ENCODE measurements at regions of chr1 and their contacts with region 1.

Region 1: DNA sequence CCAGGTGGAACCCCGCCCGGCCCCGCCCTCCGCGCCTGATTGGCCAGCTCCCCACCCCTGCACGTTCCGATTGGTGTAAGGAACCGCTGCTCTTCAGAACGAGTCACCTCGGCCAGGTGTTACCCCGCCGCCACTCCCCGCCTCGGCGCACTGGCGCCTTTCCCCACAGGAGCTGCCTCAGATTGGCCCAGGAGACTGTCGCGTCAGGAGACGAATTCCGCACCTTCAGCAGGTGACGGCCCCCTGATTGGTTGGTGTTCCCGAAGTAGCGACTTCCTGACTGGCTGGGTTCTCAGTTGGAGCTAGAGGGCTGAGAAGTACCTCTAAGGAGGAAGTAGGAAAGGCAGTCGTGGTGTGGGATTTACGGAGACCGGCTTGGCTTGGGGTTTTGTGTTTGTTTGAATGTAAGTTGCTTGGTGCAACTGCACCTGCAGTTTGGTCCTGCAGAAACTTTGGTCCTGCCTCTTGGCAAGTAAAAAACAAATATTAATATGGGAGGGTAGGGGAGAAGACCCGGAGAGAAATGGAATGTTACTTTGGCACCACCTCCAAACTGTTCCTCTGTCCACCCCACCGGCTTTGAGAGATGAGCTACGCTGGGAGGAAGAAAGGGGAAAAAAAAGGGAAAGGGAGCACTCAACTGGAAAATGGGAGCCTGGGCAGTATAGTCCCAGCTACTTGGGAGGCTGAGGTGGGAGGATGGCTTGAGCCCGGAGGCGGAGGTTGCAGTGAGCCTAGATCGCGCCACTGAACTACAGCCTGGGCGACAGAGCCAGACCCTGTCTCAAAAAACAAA is 411 bp upstream of the F11R start:
- DNase-seq: peak; percentile 90
- ATAC-seq: peak; percentile 96
- H3K4me3 Mint-ChIP-seq: peak overlapping the region; percentile 82
- H3K27ac Mint-ChIP-seq: peak overlapping the region; percentile 86
- H3K4me1 Mint-ChIP-seq: peaks cover 32% of the 10 kb centered on the region
- H3K27me3 Mint-ChIP-seq: no peaks in the 10 kb centered on the region

Region 2: DNA sequence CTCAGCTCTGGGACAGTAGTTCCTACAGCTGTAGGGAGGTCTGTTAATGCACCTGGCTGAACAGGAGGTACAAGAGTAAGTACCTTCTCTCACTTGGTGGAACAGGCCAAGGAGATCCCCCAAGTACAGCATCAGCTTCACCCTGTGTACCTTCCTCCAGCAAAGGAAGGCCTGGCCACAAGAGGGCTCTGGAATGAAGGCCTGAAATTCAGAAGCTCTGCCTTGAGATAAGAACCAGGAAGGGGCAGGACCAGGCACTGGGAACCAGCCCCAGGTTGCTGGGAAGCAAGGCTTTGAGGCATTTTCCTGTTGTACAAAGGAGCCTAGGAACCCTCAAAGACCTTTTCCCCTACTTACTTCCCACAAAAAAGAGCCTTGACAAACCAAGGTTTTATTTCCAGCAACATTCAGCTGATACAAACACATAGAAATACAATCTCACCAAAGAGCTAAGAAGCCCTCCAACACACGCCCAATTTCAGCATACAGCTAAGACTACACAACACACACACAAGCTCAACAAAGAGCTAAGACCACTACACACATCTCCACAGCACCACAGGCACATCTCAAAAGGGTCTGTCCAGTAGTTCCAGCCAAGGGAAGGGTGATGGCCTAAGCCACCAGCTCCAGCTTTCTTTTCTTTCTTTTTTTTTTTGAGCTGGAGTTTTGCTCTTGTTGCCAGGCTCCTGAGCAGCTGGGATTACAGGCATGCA is 23.9 kb before region 1 on chr1:
- CTCF ChIA-PET with region 1: interaction called, 15 read pairs
- DNase-seq: peak; percentile 66
- ATAC-seq: peak; percentile 73
- H3K4me3 Mint-ChIP-seq: no peak overlapping the region
- H3K27ac Mint-ChIP-seq: peak overlapping the region; percentile 21
- H3K4me1 Mint-ChIP-seq: peaks cover 19% of the 10 kb centered on the region
- H3K27me3 Mint-ChIP-seq: peaks cover 3% of the 10 kb centered on the region

Region 3: GRCh38 chr1:161082991-161083742 is 61.8 kb after region 1 on chr1:
- CTCF ChIA-PET with region 1: no interaction called
- DNase-seq: no peak
- ATAC-seq: no peak
- H3K4me3 Mint-ChIP-seq: no peak overlapping the region
- H3K27ac Mint-ChIP-seq: no peak overlapping the region
- H3K4me1 Mint-ChIP-seq: peaks cover 12% of the 10 kb centered on the region
- H3K27me3 Mint-ChIP-seq: no peaks in the 10 kb centered on the region

Region 4: DNA sequence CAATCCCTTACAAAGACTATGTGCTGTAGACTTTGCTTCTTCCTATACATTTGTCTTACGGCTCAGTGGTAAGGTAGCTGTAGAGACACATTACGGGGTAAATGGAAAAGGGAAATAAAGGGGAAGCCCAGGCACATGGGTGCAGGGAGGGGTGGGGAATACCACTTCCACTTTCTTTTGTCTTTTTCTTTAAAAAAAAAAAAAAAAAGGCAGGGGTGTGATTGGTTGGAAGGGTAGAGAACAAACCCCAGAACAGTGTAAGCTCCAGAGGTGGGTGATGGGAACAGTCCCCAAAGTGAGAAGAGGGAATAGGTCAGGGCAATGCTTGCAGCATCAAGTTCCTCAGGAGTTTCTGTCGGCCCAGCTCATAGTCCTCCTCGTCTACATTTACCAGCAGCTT is 100.5 kb after region 1 on chr1:
- CTCF ChIA-PET with region 1: no interaction called
- DNase-seq: no peak
- ATAC-seq: no peak
- H3K4me3 Mint-ChIP-seq: no peak overlapping the region
- H3K27ac Mint-ChIP-seq: no peak overlapping the region
- H3K4me1 Mint-ChIP-seq: peaks cover 34% of the 10 kb centered on the region
- H3K27me3 Mint-ChIP-seq: no peaks in the 10 kb centered on the region

Region 5: DNA sequence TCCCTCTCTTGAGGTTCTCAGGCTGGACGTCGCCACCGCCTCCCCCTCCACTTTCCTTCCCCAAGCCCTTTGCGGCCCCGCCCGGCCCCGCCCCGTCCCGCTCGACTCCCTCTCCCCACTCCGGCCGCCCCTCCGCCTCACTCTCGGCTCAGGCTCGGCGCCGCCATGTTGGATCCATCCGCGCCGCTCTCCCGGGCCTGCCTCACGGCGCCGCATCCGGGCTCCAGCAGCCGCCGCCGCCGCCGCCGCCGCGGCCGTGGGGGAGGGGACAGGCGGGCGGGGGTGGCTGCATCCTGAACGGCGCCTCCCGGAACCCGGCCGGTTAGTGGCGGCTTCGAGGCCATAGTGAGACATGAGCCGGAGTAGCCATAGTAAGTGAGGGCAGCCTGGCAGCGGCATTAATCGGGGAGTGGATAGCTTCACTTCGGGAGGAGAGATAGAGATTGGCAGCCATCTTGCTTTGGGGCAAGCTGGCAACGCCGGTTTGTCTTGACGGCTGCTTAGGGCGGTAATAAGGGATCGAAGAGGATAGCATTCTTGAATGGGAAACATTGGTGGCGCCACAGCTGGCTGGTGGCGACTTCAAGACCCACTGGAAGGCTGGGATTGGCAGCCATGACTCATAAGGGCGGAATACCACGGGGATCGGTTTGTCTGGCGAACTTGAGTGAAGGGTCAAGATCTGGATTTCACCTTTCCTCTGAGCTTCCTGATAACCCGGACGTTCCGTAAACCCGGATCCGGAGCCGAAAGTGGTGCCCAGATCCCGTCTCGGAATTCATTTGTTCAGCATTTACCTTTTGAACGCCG is 111.3 kb after region 1 on chr1 and contains the start of gene DEDD:
- CTCF ChIA-PET with region 1: no interaction called
- DNase-seq: peak; percentile 95
- ATAC-seq: peak; percentile 95
- H3K4me3 Mint-ChIP-seq: no peak within 1 kb of the TSS
- H3K27ac Mint-ChIP-seq: no peak within 1 kb of the TSS
- H3K4me1 Mint-ChIP-seq: peaks cover 35% of the 10 kb centered on the region
- H3K27me3 Mint-ChIP-seq: no peaks in the 10 kb centered on the region
- total RNA-seq, gene DEDD: 37.1 to 40.6 TPM

Region 6: DNA sequence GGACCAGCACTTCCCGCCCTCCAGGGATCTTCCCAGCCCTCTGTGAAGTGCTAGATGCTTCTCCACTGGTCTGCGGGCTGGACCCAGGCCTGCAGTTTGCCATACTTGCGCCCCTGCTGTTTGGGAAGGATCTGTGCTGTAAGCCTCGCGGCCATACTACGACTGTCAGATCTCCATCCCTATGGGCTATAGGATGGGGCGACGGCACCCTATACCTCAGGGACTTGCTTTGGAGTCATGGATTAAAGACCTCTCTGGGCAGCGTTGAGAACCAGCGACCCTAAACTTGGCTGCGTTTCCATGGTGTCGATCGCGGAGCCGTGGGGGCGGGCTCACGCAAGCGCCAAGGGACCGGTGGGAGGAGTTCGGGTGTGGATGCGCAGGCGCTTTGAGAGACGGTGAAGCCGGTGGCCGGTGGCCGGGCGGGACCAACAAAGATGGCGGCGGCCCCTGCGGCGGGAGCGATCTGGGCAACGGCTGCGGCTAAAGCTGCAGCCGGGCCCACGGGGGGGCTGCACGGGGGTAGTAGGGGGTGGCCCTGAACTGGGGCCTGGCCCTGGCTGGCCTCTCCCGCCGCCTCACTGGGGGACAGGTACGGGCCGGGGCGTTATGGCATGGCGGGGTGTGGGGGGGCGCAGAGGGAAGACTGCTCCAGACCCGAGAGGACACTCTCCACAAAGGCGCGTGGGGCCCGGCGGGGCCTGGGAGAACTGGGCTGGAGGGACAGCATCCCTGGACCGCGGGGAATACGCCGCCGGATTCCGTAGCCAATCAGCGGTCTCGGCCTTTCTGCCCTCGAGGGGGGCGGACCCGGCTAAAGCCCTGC is 137.9 kb after region 1 on chr1 and contains the start of gene USP21:
- CTCF ChIA-PET with region 1: no interaction called
- DNase-seq: peak; percentile 95
- ATAC-seq: peak; percentile 95
- H3K4me3 Mint-ChIP-seq: peak within 1 kb of the TSS; percentile 76
- H3K27ac Mint-ChIP-seq: peak within 1 kb of the TSS; percentile 82
- H3K4me1 Mint-ChIP-seq: peaks cover 46% of the 10 kb centered on the region
- H3K27me3 Mint-ChIP-seq: no peaks in the 10 kb centered on the region
- total RNA-seq, gene USP21: 36.0 to 40.8 TPM

Measured in activated CD8-positive, alpha-beta memory T cell treated with anti-CD3 and anti-CD28 coated beads, Interleukin-2, amount 10 ng/mL, durations not matched to agents 7 days and 5 days (primary cell).